ENCODE measurements at regions of chr9 and their contacts with region 1.

Region 1: DNA sequence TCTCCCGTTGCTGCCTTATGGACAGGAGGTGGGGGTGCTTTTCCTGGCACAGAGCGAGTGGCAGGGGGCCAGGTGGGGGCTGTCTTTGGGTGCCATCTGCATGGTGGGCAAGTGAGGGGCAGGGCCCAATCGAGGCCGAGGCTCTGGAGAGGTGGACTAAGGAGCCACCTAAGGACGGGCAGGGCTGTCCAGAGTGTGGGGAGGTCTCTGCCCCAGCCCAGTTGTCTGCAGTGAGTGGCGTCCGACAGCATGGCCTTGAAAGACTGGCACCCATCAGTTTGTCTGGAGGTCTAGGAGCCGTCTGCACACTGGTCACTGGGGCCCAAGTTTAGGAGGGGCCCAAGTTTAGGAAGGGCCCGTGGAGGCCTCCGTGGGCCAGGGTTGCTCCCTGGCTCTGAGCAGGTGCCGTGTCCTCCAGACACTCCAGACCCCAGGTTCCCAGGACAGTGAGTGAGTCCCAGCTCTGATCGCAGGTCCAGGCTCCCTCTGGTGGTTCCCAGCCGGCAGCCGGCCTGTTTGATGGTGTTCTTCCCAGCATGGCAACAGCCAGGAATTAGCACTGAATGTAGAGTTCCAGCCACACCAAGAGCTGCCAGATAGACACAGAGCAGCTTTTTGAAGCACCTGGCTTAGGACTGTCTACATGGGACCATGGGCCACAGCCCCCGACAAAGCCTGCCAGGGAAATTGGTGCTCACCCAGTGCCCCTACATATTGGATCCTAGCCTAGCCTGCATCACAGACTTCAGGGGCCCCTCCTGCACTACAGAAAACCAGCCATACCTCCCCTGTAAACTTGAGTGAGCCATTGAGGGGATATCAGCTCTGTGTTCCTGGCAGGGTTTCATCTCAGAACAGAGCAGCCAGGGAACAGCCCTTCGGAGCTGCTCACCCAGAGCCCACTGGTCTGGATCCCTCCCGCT is 120.9 kb downstream of the WNK2 start:
- DNase-seq: peak in 2 of 4 donors; percentile 50 to 73
- ATAC-seq: peak; percentile 58
- H3K4me3 ChIP-seq: no peak overlapping the region
- H3K27ac ChIP-seq: no peak overlapping the region
- H3K4me1 ChIP-seq: peaks cover 0 to 5% of the 10 kb centered on the region in 2 donors
- H3K27me3 ChIP-seq: no peaks in the 10 kb centered on the region
- CTCF ChIP-seq: peak; percentile 19 to 36

Region 2: DNA sequence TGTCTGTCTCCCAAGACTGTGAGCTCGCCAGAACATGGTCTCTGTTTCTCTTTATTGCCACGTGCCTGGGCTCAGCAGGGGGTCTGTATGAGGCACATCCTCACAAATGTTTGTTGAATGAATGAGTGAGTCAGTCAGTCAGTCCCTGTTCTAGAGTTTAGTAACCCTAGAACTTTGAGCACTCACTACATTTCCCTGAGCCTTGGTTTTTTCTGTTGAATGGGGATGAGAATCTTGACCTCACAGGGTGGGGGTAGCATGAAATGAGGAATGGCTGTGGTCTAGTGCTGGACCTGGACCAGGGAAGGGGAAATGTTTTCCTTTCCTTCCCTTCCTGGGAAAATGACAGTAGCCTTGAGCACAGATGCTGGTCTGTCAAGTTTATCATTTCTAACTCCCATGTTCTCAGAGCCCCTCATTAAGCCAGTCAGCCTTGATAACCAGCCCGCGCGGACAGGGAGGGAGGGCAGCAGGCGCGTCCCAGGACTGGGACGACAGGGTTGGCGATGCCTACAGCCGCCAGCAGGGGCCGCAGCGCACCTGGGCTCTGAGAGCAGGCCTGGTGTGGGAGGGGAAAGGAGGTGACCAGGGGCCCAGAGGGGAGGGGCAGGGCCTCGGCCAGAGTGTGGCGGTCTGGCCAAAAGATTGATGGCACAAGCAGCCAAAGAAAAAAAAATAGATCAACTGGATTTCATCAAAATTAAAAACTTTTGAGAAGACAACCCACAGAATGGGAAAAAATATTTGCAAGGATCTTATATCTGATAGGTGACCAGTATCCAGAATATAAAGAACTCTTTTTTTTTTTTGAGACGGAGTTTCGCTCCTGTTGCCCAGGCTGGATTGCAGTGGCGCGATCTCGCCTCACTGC is 145.0 kb before region 1 on chr9:
- intact Hi-C with region 1: loop called in 1 of 2 experiments (anchors 5 kb)
- DNase-seq: peak; percentile 60 to 96 (median 87)
- ATAC-seq: peak; percentile 98
- H3K4me3 ChIP-seq: no peak overlapping the region
- H3K27ac ChIP-seq: no peak overlapping the region
- H3K4me1 ChIP-seq: peaks cover 0 to 10% of the 10 kb centered on the region in 2 donors
- H3K27me3 ChIP-seq: no peaks in the 10 kb centered on the region
- CTCF ChIP-seq: peak; percentile 90 to 96

Region 3: DNA sequence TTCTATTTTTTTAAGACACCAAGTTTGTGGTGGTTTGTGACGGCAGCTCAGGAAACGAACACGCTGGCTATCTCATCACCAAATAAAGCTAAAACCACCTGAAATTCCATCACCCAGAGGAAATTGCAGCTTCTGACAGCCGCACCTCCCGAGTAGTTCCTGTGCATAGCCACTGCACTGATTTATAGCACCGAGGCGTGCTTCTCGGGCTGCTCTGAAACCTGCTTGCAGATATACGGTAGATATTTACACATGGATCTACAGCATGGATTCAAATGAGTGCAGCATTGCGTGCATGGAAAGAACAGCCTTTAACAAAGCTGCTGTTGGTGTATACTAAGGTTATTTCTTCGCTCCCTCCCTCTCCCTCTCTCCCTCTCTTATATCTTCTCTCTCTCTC is 425.4 kb after region 1 on chr9:
- intact Hi-C with region 1: no loop called
- DNase-seq: peak in 1 of 4 donors; percentile 2
- ATAC-seq: peak; percentile 54
- H3K4me3 ChIP-seq: no peak overlapping the region
- H3K27ac ChIP-seq: no peak overlapping the region
- H3K4me1 ChIP-seq: no peaks in the 10 kb centered on the region
- H3K27me3 ChIP-seq: peaks cover 0 to 25% of the 10 kb centered on the region in 2 donors
- CTCF ChIP-seq: no peak